Esophagus muscularis mucosa (tissue), 4 donors: ENCODE measurements at regions of chr11 and their contacts with region 1.

Region 1: GRCh38 chr11:86151174-86152005 is 82.5 kb upstream of the PICALM start:
- DNase-seq: no peak
- H3K4me3 ChIP-seq: no peak overlapping the region
- H3K27ac ChIP-seq: peak overlapping the region; percentile 74 to 83 (median 78)
- H3K4me1 ChIP-seq: peaks cover 28 to 44% (median 40%) of the 10 kb centered on the region in 4 donors
- H3K27me3 ChIP-seq: no peaks in the 10 kb centered on the region
- CTCF ChIP-seq: no peak
- EP300 ChIP-seq: no peak
- POLR2A ChIP-seq: no peak

Region 2: DNA sequence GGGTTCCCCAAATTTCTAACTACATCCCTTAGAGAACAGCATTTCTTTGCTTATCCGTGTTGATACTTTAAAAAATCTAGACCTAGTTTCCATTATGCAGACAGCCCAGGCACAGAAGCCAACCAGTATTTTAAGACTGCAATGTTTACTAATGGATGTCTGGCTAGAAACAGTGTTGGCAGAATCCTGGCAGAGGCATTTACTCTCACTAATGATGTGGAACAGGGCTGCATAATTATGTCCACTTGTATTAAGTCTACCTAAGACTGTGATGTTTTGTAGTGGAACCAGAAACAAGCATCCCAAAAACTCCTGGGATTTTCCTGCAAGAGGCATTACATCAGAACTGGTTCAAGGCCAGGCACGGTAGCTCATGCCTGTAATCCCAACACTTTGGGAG is 32.3 kb before region 1 on chr11:
- intact Hi-C with region 1: loop called (anchors 1 kb)
- DNase-seq: no peak
- H3K4me3 ChIP-seq: no peak overlapping the region
- H3K27ac ChIP-seq: peak overlapping the region; percentile 36 to 68 (median 48)
- H3K4me1 ChIP-seq: peaks cover 0 to 52% (median 46%) of the 10 kb centered on the region in 4 donors
- H3K27me3 ChIP-seq: no peaks in the 10 kb centered on the region
- CTCF ChIP-seq: no peak
- EP300 ChIP-seq: no peak
- POLR2A ChIP-seq: no peak

Region 3: GRCh38 chr11:86211619-86212018 is 60.2 kb after region 1 on chr11:
- intact Hi-C with region 1: no loop called
- DNase-seq: no peak
- H3K4me3 ChIP-seq: no peak overlapping the region
- H3K27ac ChIP-seq: no peak overlapping the region
- H3K4me1 ChIP-seq: no peaks in the 10 kb centered on the region
- H3K27me3 ChIP-seq: no peaks in the 10 kb centered on the region
- CTCF ChIP-seq: no peak
- EP300 ChIP-seq: no peak
- POLR2A ChIP-seq: no peak